HEK293T (cell line): ENCODE measurements at regions of chr19 and their contacts with region 1.

Region 1: GRCh38 chr19:46704379-46705076 is 12.4 kb downstream of the PRKD2 start:
- DNase-seq: peak; percentile 86

Region 2: DNA sequence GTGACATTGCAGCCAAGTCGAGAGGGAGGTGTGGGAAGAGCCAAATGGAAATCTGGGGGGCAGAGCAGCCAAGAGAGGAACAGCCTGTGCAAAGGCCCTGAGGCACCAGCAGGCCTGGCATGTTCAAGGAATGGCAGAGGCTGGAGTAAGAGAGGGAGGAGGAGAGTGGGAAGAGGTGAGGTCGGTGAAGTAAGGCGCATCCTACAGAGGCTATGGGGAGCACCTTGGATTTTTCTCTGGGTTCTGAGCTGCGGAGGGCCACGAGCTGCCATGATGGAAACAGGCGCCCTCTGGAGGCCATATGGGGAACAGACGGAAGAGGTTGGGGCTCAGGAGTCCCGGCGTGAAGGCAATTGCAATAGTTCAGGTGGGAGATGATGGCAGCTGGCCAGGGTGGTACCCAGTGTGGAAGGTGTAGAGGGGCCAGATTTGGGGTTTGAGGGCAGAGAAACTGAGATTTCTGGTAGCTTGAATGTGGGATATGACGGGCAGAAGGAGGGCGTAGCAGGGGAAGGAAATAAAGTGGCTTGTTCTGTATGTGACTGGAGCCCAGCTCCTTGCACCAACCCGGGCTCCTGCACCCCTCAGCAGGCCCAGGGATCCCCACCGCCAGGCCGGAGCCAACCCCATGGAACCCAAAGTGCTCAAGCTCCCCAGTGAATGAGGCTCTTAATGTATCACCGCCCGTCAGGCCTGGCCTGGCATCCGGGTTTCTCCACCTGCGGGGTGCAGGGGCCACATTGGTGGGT is 62.2 kb after region 1 on chr19:
- CTCF ChIA-PET with region 1: interaction called, 13 read pairs
- POLR2A ChIA-PET with region 1: no interaction called
- DNase-seq: peak; percentile 74